ENCODE measurements at regions of chr11 and their contacts with region 1.

Region 1: GRCh38 chr11:95671768-95672167 is 117.8 kb downstream of the FAM76B start:
- DNase-seq: no peak
- H3K4me3 ChIP-seq: no peak overlapping the region
- H3K27ac ChIP-seq: no peak overlapping the region
- H3K4me1 ChIP-seq: no peaks in the 10 kb centered on the region
- H3K27me3 ChIP-seq: no peaks in the 10 kb centered on the region
- CTCF ChIP-seq: no peak
- EP300 ChIP-seq: no peak
- POLR2A ChIP-seq: no peak

Region 2: DNA sequence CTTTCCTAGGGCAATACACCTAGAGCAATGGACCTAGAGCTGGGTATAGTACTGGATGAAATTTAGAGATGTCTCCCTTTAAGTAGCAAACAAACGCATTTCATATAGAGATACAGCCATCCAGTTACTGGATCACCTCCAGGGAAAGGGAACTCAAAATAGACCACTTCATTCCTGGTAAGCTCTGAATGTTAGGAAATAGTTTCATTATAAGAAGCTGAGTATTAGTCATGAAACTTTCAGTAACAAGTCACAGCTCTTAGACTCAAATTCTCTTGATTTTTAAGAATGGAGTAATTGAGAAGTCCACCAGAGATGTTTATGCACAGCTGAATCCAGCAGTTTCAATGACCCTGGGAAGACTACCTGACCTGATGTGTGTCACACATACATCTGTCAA is 104.1 kb before region 1 on chr11:
- in situ Hi-C with region 1: no loop called
- intact Hi-C with region 1: no loop called
- DNase-seq: no peak
- H3K4me3 ChIP-seq: no peak overlapping the region
- H3K27ac ChIP-seq: no peak overlapping the region
- H3K4me1 ChIP-seq: no peaks in the 10 kb centered on the region
- H3K27me3 ChIP-seq: no peaks in the 10 kb centered on the region
- CTCF ChIP-seq: no peak
- EP300 ChIP-seq: no peak
- POLR2A ChIP-seq: no peak

Region 3: GRCh38 chr11:95699631-95700470 is 28.1 kb after region 1 on chr11:
- in situ Hi-C with region 1: no loop called
- intact Hi-C with region 1: loop called (anchors 2 kb)
- DNase-seq: no peak
- H3K4me3 ChIP-seq: no peak overlapping the region
- H3K27ac ChIP-seq: peak overlapping the region in 3 of 4 donors; percentile 5 to 35 (median 23)
- H3K4me1 ChIP-seq: peaks cover 3 to 30% (median 10%) of the 10 kb centered on the region in 4 donors
- H3K27me3 ChIP-seq: no peaks in the 10 kb centered on the region
- CTCF ChIP-seq: no peak
- EP300 ChIP-seq: no peak
- POLR2A ChIP-seq: no peak